CD4-positive, alpha-beta T cell (primary cell): ENCODE measurements at regions of chr5 and their contacts with region 1.

Region 1: GRCh38 chr5:126776497-126777256 is at the start of gene LMNB1:
- DNase-seq: peak; percentile 87 to 97 (median 92)
- ATAC-seq: peak; percentile 66
- H3K4me3 ChIP-seq: peak within 1 kb of the TSS; percentile 97
- H3K4me3 Mint-ChIP-seq: peak within 1 kb of the TSS; percentile 87
- H3K27ac ChIP-seq: peak within 1 kb of the TSS; percentile 77 to 96
- H3K27ac Mint-ChIP-seq: peak within 1 kb of the TSS; percentile 93
- H3K4me1 ChIP-seq: peaks cover 28% of the 10 kb centered on the region
- H3K4me1 Mint-ChIP-seq: peaks cover 23% of the 10 kb centered on the region
- H3K27me3 ChIP-seq: no peaks in the 10 kb centered on the region
- H3K27me3 Mint-ChIP-seq: no peaks in the 10 kb centered on the region
- CTCF ChIP-seq: peak; percentile 16
- total RNA-seq, gene LMNB1: 30.6 to 31.1 TPM

Region 2: DNA sequence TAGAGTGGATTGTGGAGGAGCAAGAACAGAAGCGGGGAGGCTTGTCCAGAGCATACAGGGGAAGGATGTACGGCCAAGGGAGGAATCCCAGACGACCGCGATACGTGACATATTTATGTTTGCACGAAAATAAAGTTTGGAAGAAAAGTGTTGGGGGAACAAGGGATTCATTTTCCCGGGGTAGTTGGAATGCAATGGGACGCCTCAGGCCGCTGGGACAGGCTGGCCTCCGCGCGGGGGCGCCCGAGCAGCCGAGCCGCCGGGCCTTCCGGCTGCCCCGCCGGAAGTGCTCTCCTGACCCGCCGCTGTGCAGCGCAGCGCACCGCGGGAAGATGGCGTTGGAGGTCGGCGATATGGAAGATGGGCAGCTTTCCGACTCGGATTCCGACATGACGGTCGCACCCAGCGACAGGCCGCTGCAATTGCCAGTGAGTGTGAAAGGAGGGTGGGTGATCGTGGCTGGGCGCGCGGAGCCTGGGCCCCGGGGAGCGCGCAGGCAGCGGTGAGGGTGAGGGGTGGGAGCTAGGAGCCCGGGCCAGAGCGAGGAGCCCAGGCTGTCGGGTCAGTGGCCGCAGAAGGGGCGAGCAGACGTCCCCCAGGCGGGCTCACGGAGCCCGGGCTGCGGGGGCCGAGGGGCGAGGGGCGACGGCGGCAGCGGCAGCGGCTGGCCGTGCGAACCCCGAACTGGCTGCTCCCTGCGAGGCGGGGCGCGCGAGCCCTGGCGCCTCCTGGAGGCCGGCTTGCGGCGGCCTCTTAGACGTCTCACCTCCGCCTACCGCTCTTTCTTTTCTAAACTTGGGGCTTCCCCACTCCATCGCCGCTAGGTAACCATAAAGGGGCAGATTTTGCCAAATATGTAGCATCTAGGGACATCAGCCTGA is 175.8 kb before region 1 on chr5 and contains the start of gene PHAX:
- CTCF ChIA-PET with region 1: interaction called, 5 read pairs
- POLR2A ChIA-PET with region 1: interaction called, 13 read pairs
- intact Hi-C with region 1: loop called (anchors 1 to 2 kb)
- DNase-seq: peak; percentile 43 to 88 (median 66)
- ATAC-seq: peak; percentile 93
- H3K4me3 ChIP-seq: peak within 1 kb of the TSS; percentile 82
- H3K4me3 Mint-ChIP-seq: peak within 1 kb of the TSS; percentile 92
- H3K27ac ChIP-seq: peak within 1 kb of the TSS; percentile 61 to 66
- H3K27ac Mint-ChIP-seq: peak within 1 kb of the TSS; percentile 79
- H3K4me1 ChIP-seq: peaks cover 26% of the 10 kb centered on the region
- H3K4me1 Mint-ChIP-seq: peaks cover 36% of the 10 kb centered on the region
- H3K27me3 ChIP-seq: no peaks in the 10 kb centered on the region
- H3K27me3 Mint-ChIP-seq: no peaks in the 10 kb centered on the region
- CTCF ChIP-seq: peak; percentile 69
- total RNA-seq, gene PHAX: 31.2 to 32.9 TPM

Region 3: GRCh38 chr5:126645132-126645531 is 131.5 kb before region 1 on chr5:
- CTCF ChIA-PET with region 1: no interaction called
- POLR2A ChIA-PET with region 1: no interaction called
- intact Hi-C with region 1: no loop called
- DNase-seq: no peak
- ATAC-seq: no peak
- H3K4me3 ChIP-seq: no peak overlapping the region
- H3K4me3 Mint-ChIP-seq: no peak overlapping the region
- H3K27ac ChIP-seq: no peak overlapping the region
- H3K27ac Mint-ChIP-seq: no peak overlapping the region
- H3K4me1 ChIP-seq: no peaks in the 10 kb centered on the region
- H3K4me1 Mint-ChIP-seq: no peaks in the 10 kb centered on the region
- H3K27me3 ChIP-seq: peaks cover 0 to 4% of the 10 kb centered on the region in 2 experiments
- H3K27me3 Mint-ChIP-seq: peaks cover 4% of the 10 kb centered on the region
- CTCF ChIP-seq: no peak

Region 4: DNA sequence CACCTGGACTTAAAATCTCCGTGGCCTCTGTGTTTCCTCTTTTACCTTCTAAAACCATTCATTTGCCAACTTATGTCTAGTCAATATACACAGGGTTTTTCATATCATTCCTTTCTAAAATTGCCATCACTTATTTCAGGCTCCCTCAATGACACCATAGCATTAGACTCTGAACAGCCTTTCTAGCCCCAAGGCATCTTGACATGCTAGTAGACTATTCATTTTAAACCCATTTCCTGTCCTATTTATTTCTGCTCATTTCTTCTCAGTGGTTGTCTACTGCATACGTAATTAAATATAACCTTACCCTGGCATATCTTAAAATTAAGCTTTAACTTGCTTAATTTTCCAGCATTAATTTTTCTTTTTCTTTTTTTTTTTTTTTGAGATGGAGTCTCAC is 92.8 kb before region 1 on chr5:
- CTCF ChIA-PET with region 1: interaction called, 49 read pairs
- POLR2A ChIA-PET with region 1: interaction called, 46 read pairs
- intact Hi-C with region 1: no loop called
- DNase-seq: no peak
- ATAC-seq: no peak
- H3K4me3 ChIP-seq: no peak overlapping the region
- H3K4me3 Mint-ChIP-seq: no peak overlapping the region
- H3K27ac ChIP-seq: no peak overlapping the region
- H3K27ac Mint-ChIP-seq: no peak overlapping the region
- H3K4me1 ChIP-seq: no peaks in the 10 kb centered on the region
- H3K4me1 Mint-ChIP-seq: no peaks in the 10 kb centered on the region
- H3K27me3 ChIP-seq: no peaks in the 10 kb centered on the region
- H3K27me3 Mint-ChIP-seq: no peaks in the 10 kb centered on the region
- CTCF ChIP-seq: no peak

Region 5: GRCh38 chr5:126801992-126802294 is 25.3 kb after region 1 on chr5:
- CTCF ChIA-PET with region 1: interaction called, 6 read pairs
- POLR2A ChIA-PET with region 1: interaction called, 11 read pairs
- intact Hi-C with region 1: no loop called
- DNase-seq: peak in 4 of 14 experiments; percentile 12 to 59 (median 52)
- ATAC-seq: peak; percentile 48
- H3K4me3 ChIP-seq: no peak overlapping the region
- H3K4me3 Mint-ChIP-seq: no peak overlapping the region
- H3K27ac ChIP-seq: no peak overlapping the region
- H3K27ac Mint-ChIP-seq: no peak overlapping the region
- H3K4me1 ChIP-seq: peaks cover 9% of the 10 kb centered on the region
- H3K4me1 Mint-ChIP-seq: peaks cover 40% of the 10 kb centered on the region
- H3K27me3 ChIP-seq: no peaks in the 10 kb centered on the region
- H3K27me3 Mint-ChIP-seq: no peaks in the 10 kb centered on the region
- CTCF ChIP-seq: no peak

Region 6: DNA sequence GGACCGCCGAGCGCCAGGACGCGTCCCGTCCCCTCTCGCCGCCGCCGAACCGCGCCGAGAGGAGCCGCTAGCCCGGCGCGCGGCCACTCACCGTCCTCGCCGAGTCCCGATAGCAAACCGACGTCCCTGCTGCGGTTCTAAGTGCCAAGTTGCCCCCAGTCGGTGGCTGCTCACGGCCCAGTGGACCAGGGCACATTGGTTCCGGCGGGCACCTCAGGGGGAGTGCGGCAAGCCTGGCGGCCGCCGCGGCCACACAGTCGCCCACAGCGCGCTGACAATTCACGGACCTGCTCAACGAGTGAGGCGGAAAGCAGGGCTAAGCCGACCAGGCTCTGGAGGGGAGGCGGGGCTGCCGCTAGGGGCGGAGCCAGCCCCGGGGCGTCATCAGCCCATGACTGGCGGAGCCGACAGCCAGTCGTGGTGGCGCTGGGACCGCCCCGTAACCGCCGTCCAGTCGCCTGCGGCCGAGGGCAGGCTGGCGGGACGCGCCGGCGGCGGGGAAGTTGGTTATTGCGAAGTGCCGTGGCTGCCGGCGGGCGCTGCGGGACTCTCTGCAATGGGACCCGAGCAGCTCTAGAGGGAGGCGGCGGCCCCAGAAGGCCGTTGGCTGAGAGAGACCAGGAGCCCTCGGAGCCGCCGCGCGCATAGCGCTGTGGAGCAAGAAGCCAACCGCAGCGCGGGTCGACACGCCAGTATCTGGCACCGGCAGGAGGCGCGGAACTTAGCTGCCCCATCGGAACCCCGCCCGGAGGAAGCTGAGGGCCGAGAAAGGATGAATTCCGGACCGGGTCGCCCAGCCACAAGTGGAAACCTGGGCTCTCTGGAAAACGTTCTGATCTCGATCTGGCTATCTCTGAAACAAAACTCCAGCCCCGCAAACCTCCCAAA is 253.8 kb after region 1 on chr5 and contains the start of gene MARCHF3:
- CTCF ChIA-PET with region 1: interaction called, 3 read pairs
- POLR2A ChIA-PET with region 1: interaction called, 21 read pairs
- intact Hi-C with region 1: loop called in 1 of 2 experiments (anchors 5 kb)
- DNase-seq: peak; percentile 80 to 98 (median 92)
- ATAC-seq: peak; percentile 94
- H3K4me3 ChIP-seq: peak within 1 kb of the TSS; percentile 93
- H3K4me3 Mint-ChIP-seq: peak within 1 kb of the TSS; percentile 97
- H3K27ac ChIP-seq: peak within 1 kb of the TSS; percentile 9 to 63
- H3K27ac Mint-ChIP-seq: peak within 1 kb of the TSS; percentile 77
- H3K4me1 ChIP-seq: peaks cover 24% of the 10 kb centered on the region
- H3K4me1 Mint-ChIP-seq: peaks cover 21% of the 10 kb centered on the region
- H3K27me3 ChIP-seq: no peaks in the 10 kb centered on the region
- H3K27me3 Mint-ChIP-seq: peaks cover 12% of the 10 kb centered on the region
- CTCF ChIP-seq: peak; percentile 23
- total RNA-seq, gene MARCHF3: 5.2 to 6.2 TPM

Region 7: GRCh38 chr5:128083033-128083810 is 1306.5 kb after region 1 on chr5 and contains the start of gene SLC12A2:
- CTCF ChIA-PET with region 1: no interaction called
- POLR2A ChIA-PET with region 1: interaction called, 6 read pairs
- intact Hi-C with region 1: loop called in 1 of 2 experiments (anchors 5 kb)
- DNase-seq: peak; percentile 80 to 99 (median 88)
- ATAC-seq: peak; percentile 72
- H3K4me3 ChIP-seq: peak within 1 kb of the TSS; percentile 81
- H3K4me3 Mint-ChIP-seq: peak within 1 kb of the TSS; percentile 97
- H3K27ac ChIP-seq: peak within 1 kb of the TSS; percentile 89 to 90
- H3K27ac Mint-ChIP-seq: peak within 1 kb of the TSS; percentile 92
- H3K4me1 ChIP-seq: peaks cover 27% of the 10 kb centered on the region
- H3K4me1 Mint-ChIP-seq: peaks cover 79% of the 10 kb centered on the region
- H3K27me3 ChIP-seq: no peaks in the 10 kb centered on the region
- H3K27me3 Mint-ChIP-seq: no peaks in the 10 kb centered on the region
- CTCF ChIP-seq: no peak
- total RNA-seq, gene SLC12A2: 13.7 to 16.4 TPM